ENCODE measurements at regions of chr12 and their contacts with region 1.

Region 1: DNA sequence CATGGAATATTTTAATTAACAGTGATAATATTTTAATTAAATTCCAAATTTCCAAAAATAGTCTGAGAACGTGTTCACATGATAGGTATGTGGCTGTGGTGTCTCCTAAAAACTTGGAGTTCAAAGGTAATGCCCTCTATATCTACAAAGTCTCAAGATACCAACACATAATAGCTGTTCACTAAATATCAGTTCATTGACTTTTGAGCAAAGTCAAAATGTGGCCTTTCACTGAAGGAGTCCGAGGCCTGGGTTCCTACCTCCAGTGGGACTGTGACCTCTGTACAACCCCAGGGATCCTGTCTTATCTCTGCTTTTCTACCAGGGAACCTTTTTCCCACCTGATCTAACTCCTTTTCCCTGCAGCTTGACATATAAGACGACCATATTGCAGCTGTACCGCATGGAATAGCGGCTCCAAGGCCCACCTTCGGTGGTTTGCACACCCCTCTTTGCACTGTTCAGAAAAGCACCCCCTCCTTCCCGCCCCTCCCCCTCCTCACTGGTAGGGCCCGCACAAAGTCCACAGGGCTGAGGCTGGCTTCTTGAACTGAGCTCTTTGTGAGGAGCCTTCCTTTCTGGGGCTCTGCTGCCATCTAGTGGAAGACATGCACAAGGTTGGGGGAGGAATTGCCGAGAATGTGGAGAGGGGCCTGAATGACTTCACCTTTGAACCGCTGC is 3.1 kb downstream of the CCND2 start:
- DNase-seq: peak; percentile 85 to 92 (median 88)
- H3K4me3 ChIP-seq: peak overlapping the region; percentile 84 to 96
- H3K4me3 Mint-ChIP-seq: peak overlapping the region; percentile 91 to 99 (median 96)
- H3K27ac ChIP-seq: peak overlapping the region; percentile 91
- H3K27ac Mint-ChIP-seq: peak overlapping the region; percentile 91 to 100 (median 98)
- H3K4me1 ChIP-seq: peaks cover 68% of the 10 kb centered on the region
- H3K4me1 Mint-ChIP-seq: peaks cover 34 to 88% (median 59%) of the 10 kb centered on the region in 4 donors
- H3K27me3 ChIP-seq: no peaks in the 10 kb centered on the region
- H3K27me3 Mint-ChIP-seq: no peaks in the 10 kb centered on the region

Region 2: DNA sequence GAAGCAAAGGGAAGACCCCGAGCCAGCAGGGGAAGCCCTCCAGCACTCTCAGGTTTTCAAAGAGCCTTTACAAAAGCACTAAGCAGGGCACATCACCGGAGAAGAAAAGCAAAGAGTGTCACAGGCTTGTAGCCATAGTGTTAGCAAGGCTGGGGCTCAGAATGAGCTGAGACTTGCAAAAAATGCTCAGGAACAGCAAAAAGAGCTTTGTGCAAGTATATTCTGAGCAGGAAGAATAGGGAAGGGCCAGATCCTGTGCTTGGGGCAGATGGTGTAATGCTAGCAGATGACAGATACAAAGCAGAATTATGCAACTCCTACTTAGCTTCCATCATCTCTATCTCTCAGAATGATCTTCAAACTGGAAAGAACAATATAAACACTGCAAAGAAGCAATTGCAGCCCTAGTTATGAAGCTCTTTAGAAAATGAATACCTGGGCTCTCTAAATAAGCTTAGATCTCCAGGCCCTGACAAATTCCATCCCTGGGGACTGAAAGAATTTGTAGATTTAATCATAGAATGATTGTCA is 379.8 kb before region 1 on chr12:
- CTCF ChIA-PET with region 1: interaction called, 304 read pairs
- POLR2A ChIA-PET with region 1: interaction called, 17 read pairs
- intact Hi-C with region 1: no loop called
- DNase-seq: no peak
- H3K4me3 ChIP-seq: peak overlapping the region in 1 of 2 donors; percentile 17
- H3K4me3 Mint-ChIP-seq: peak overlapping the region; percentile 61 to 88 (median 81)
- H3K27ac ChIP-seq: peak overlapping the region; percentile 61
- H3K27ac Mint-ChIP-seq: peak overlapping the region in 5 of 7 donors; percentile 95 to 99 (median 97)
- H3K4me1 ChIP-seq: peaks cover 95% of the 10 kb centered on the region
- H3K4me1 Mint-ChIP-seq: peaks cover 0 to 40% (median 19%) of the 10 kb centered on the region in 4 donors
- H3K27me3 ChIP-seq: no peaks in the 10 kb centered on the region
- H3K27me3 Mint-ChIP-seq: no peaks in the 10 kb centered on the region

Region 3: DNA sequence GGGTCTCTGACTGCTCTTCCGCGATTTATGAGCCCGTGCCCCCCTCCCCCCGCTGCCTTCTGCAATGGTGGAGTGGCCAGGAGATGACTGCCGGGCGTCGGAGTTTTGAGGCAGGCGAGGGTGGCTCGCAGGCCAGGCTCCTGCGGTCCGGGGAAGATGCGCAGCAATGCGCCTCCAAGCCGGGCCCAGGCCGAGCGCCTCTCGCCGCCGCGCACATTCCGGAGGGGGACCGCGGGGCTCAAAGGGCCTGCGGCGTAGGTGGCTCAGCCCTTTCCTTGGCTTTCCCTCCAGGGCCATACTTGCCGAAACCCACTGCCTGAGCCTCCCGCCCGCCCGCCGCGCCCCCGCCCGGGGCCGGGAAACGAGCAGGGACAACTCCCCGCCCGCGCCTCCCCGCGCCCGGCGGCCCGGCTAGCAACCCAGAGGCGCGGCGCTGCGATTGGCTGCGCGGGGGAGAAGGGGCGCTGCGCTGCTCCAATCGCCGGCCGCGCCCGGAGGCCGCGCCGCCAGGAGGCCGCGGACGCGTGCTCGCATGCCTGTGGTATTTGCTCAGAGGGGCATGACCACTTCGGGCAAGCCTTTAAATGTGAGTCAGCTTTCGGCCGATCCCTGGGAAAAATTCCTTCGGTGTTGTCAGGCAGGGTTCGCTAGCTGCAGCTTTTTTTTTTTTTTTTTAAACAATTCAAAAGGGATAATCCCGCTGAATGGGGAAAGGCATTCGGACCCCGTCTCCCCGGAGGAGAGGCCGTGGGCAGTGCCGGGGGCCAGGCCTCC is 245.5 kb before region 1 on chr12:
- CTCF ChIA-PET with region 1: interaction called, 70 read pairs
- POLR2A ChIA-PET with region 1: interaction called, 4 read pairs
- intact Hi-C with region 1: no loop called
- DNase-seq: peak; percentile 67 to 76 (median 70)
- H3K4me3 ChIP-seq: peak overlapping the region in 1 of 2 donors; percentile 52
- H3K4me3 Mint-ChIP-seq: peak overlapping the region; percentile 75 to 87 (median 78)
- H3K27ac ChIP-seq: no peak overlapping the region
- H3K27ac Mint-ChIP-seq: peak overlapping the region; percentile 45 to 90 (median 82)
- H3K4me1 ChIP-seq: peaks cover 34% of the 10 kb centered on the region
- H3K4me1 Mint-ChIP-seq: peaks cover 27 to 45% (median 35%) of the 10 kb centered on the region in 4 donors
- H3K27me3 ChIP-seq: no peaks in the 10 kb centered on the region
- H3K27me3 Mint-ChIP-seq: no peaks in the 10 kb centered on the region

Region 4: GRCh38 chr12:4148418-4149056 is 128.1 kb before region 1 on chr12:
- CTCF ChIA-PET with region 1: interaction called, 111 read pairs
- POLR2A ChIA-PET with region 1: interaction called, 253 read pairs
- intact Hi-C with region 1: loop called (anchors 1 kb)
- DNase-seq: peak; percentile 48 to 82 (median 57)
- H3K4me3 ChIP-seq: no peak overlapping the region
- H3K4me3 Mint-ChIP-seq: peak overlapping the region in 2 of 8 donors; percentile 22 to 26
- H3K27ac ChIP-seq: no peak overlapping the region
- H3K27ac Mint-ChIP-seq: peak overlapping the region in 6 of 7 donors; percentile 75 to 97 (median 84)
- H3K4me1 ChIP-seq: peaks cover 69% of the 10 kb centered on the region
- H3K4me1 Mint-ChIP-seq: peaks cover 57 to 90% (median 69%) of the 10 kb centered on the region in 4 donors
- H3K27me3 ChIP-seq: no peaks in the 10 kb centered on the region
- H3K27me3 Mint-ChIP-seq: no peaks in the 10 kb centered on the region

Region 5: DNA sequence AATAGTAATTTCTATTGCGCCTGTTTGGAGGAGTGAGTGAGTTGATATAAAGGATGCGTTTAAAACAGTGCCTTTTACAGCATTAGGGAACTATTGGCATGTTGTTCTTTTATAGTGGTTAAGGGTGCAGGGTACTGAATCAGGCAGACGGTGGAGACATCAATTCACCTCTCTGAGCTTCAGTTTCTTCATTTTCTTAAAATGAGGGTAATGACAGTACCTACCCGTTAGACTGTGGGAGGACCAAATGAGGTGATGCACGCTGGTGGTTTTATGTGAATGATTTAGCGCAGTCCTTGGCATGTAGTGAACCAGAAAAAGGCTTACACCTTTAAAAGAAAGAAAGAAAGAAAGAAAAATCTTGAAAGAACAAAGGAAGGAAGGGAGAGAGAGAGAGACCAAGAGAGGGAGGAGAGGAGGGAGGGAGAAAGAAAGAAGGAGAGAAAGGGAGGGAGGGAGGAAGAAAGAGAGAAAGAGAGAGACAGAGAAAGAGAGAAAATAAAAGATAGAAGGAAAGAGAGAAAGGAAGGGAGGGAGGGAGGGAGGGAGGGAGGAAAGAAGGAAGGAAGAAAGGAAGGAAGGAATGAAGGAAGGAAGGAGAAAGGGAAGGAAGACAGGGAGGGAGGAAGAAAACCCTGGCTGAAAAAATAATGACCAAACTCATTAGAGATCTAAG is 25.3 kb before region 1 on chr12:
- CTCF ChIA-PET with region 1: interaction called, 51 read pairs
- POLR2A ChIA-PET with region 1: interaction called, 21 read pairs
- intact Hi-C with region 1: loop called (anchors 1 kb)
- DNase-seq: peak; percentile 26 to 64 (median 45)
- H3K4me3 ChIP-seq: no peak overlapping the region
- H3K4me3 Mint-ChIP-seq: peak overlapping the region in 2 of 8 donors; percentile 14 to 50
- H3K27ac ChIP-seq: no peak overlapping the region
- H3K27ac Mint-ChIP-seq: peak overlapping the region in 5 of 7 donors; percentile 0 to 86 (median 57)
- H3K4me1 ChIP-seq: no peaks in the 10 kb centered on the region
- H3K4me1 Mint-ChIP-seq: peaks cover 4 to 9% (median 6%) of the 10 kb centered on the region in 4 donors
- H3K27me3 ChIP-seq: no peaks in the 10 kb centered on the region
- H3K27me3 Mint-ChIP-seq: peaks cover 4 to 7% of the 10 kb centered on the region in 2 donors